ENCODE measurements at regions of chr12 and their contacts with region 1.

Region 1: DNA sequence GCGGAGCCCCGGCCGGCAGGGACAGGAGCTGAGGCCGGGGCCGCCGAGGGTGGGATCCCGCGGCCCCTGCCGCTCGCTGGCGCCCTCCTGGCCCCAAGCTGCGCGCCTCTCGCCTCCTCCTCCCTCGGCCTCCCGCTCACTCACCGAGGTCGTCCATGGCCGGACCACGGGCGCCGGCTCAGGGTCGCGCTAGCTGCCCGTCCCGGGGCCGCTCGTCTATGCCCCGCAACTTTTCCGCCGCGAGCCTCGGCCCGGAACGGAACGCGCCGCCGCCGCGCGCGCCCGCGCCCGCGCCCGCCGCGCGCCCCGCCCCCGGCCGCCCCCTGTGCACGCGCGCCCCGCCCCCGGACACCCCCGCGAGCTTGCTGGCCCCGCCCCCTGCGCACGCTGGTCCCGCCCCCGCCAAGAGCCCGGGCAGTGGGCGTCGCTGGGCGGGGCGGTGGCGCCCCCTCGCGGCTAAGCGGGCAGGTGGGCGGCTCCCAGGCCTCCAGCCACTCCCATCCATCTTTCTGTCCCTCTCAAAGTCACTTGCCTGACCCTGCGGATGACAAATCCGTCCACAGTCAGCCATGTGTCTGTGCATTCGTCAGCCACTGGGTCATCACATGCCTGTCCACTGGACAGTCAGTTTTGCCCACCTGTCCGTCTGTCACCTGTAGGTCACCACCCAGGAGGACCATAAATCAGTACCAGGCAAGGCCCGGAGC is at the start of gene PXN:
- DNase-seq: peak; percentile 92
- H3K4me3 Mint-ChIP-seq: peak within 1 kb of the TSS; percentile 90
- H3K27ac Mint-ChIP-seq: peak within 1 kb of the TSS; percentile 81
- H3K4me1 Mint-ChIP-seq: peaks cover 42% of the 10 kb centered on the region
- H3K27me3 Mint-ChIP-seq: no peaks in the 10 kb centered on the region
- total RNA-seq, gene PXN: 271 to 274 TPM

Region 2: DNA sequence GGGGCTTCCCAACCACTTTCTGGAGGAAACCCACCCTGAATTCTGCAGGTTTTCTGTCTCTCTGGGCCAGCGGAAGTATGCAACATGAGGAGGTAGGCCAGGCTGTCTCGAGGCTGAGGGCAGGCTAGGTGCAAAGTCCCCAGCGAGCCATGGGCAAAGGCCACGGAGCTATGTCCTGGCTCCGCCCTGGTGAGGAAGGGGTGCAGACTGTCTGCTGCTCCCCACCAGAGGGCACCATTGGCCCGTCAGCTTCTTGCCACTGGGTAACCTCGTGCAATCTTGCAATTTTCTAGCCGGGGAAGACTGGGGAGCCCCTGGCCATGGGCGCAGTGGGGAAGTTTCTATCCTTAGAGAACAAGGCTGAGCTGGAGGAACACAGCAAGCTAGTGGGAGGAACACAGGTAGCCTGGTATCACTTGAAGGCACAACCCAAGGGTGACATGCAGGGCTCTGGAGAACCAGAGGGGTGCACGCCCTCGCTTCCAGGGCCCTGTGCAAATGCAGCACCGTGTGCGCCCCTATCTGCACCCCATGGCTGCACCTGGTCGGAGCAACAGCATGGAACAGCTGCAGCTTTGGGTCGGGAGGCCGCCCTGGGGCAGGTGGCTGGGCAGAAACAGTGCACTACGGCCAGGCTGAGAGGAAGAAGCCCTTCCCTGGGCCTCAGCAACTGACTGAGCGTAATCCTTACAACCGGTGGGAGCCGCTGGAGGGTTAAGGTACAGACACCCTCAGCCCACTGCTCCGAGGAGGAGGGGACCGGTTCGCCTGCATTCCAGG is 37.1 kb before region 1 on chr12:
- CTCF ChIA-PET with region 1: interaction called, 561 read pairs
- POLR2A ChIA-PET with region 1: interaction called, 280 read pairs
- DNase-seq: peak; percentile 91
- H3K4me3 Mint-ChIP-seq: peak overlapping the region; percentile 47
- H3K27ac Mint-ChIP-seq: peak overlapping the region; percentile 77
- H3K4me1 Mint-ChIP-seq: peaks cover 85% of the 10 kb centered on the region
- H3K27me3 Mint-ChIP-seq: no peaks in the 10 kb centered on the region

Region 3: GRCh38 chr12:120234643-120235368 is 30.8 kb before region 1 on chr12:
- CTCF ChIA-PET with region 1: interaction called, 561 read pairs
- POLR2A ChIA-PET with region 1: interaction called, 280 read pairs
- DNase-seq: no peak
- H3K4me3 Mint-ChIP-seq: no peak overlapping the region
- H3K27ac Mint-ChIP-seq: no peak overlapping the region
- H3K4me1 Mint-ChIP-seq: peaks cover 85% of the 10 kb centered on the region
- H3K27me3 Mint-ChIP-seq: no peaks in the 10 kb centered on the region

Region 4: GRCh38 chr12:120242275-120242799 is 23.3 kb before region 1 on chr12:
- CTCF ChIA-PET with region 1: interaction called, 58 read pairs
- POLR2A ChIA-PET with region 1: interaction called, 338 read pairs
- DNase-seq: no peak
- H3K4me3 Mint-ChIP-seq: no peak overlapping the region
- H3K27ac Mint-ChIP-seq: no peak overlapping the region
- H3K4me1 Mint-ChIP-seq: peaks cover 69% of the 10 kb centered on the region
- H3K27me3 Mint-ChIP-seq: no peaks in the 10 kb centered on the region

Region 5: GRCh38 chr12:120249875-120250795 is 15.5 kb before region 1 on chr12:
- CTCF ChIA-PET with region 1: interaction called, 63 read pairs
- POLR2A ChIA-PET with region 1: interaction called, 338 read pairs
- DNase-seq: peak; percentile 80
- H3K4me3 Mint-ChIP-seq: peak overlapping the region; percentile 57
- H3K27ac Mint-ChIP-seq: peak overlapping the region; percentile 96
- H3K4me1 Mint-ChIP-seq: peaks cover 84% of the 10 kb centered on the region
- H3K27me3 Mint-ChIP-seq: no peaks in the 10 kb centered on the region

Measured in activated CD4-positive, alpha-beta memory T cell treated with anti-CD3 and anti-CD28 coated beads, Interleukin-2, amount 10 ng/mL, durations not matched to agents 7 days and 5 days (primary cell).